ENCODE measurements at regions of chr17 and their contacts with region 1.

Region 1: DNA sequence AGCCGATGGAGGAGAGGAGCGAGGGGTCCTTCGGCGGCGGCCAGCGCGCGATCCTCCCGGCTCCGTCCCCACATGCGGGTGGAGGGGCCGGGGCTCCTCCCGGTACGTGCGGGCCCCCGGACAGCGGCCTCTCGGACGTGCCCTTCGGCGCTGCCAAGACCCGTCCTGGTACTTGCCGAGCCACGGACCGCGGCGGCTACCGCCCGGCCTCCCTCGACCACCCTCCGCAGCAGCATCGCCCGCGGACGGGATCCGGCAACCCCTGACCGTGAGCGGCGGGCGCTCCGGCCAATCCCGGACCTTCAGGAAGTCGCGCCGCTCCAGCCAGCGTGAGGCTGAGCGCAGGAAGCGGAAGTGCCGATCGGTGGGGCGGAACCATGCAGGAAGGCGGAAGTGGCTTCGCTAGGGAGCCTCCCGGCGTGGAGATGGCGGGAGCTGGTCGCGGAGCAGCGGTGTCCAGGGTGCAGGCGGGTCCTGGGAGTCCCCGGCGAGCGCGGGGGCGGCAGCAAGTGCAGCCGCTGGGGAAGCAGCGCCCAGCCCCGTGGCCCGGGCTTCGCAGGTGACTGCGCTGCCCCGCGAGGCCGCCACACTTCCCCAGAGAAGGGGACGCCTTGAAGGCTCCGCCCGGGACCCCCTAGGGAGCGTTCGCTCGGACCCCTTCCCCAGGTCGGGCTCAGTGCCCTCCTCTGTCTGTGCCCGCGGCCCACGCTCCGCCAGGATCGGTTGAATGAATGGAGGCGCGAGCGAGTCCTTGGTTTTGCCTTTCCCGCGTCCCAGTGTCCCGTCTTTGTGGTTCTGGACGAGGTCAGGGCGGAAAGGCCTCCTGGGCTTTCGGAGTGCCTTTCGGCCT is at the starts of genes CCDC137 and OXLD1:
- DNase-seq: peak; percentile 79 to 97
- H3K4me3 ChIP-seq: peak within 1 kb of the TSS; percentile 68 to 69
- H3K27ac ChIP-seq: peak within 1 kb of the TSS; percentile 65 to 80
- H3K4me1 ChIP-seq: peaks cover 3 to 17% of the 10 kb centered on the region in 2 donors
- H3K27me3 ChIP-seq: no peaks in the 10 kb centered on the region
- CTCF ChIP-seq: no peak
- total RNA-seq, gene CCDC137: 15.8 TPM
- total RNA-seq, gene OXLD1: 96.1 TPM

Region 2: DNA sequence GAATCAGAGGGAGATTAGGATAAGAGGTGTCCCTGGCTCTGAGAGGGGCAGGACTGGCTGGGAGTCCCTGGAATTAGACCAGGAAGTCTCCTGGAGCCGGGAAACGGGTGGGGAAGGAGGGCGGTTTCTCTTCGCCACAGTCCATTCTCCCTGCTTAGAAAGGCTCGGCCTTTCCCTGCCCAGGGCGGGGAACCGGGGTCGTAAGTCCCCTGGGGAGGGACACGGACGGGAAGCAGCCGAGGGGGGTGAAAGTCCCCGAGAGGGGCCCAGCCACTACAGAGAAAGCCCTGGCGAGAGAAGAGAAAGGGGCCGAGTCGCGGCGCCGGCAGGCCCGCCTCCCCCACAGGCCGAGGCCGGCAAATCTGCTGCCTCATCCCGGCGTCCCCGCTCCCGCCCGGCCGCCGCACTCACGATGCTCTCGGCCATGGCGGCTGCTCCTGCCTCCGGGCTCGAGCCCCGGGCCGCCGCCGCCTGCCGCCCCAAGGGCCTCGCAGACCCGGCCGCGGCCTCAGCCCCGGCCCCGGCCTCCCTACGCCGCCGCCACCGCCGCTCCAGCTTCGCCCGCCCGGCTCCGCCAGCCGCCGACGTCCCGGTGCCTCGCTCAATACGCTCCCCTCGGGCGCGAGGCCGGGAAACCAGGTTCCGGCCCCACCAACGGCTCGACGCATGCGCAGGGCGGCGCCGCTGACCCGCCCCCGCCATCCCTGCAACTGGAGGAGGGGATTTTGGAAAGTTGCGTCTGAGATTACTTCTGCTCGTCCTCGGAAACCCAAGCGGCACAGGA is 29.9 kb before region 1 on chr17 and contains the starts of genes NPLOC4 and TSPAN10:
- intact Hi-C with region 1: loop called (anchors 1 kb)
- DNase-seq: peak; percentile 14 to 90
- H3K4me3 ChIP-seq: peak within 1 kb of the TSS; percentile 80 to 89
- H3K27ac ChIP-seq: peak within 1 kb of the TSS; percentile 78 to 85
- H3K4me1 ChIP-seq: peaks cover 9 to 17% of the 10 kb centered on the region in 2 donors
- H3K27me3 ChIP-seq: no peaks in the 10 kb centered on the region
- CTCF ChIP-seq: peak in 1 of 3 experiments; percentile 7
- total RNA-seq, gene NPLOC4: 128 TPM
- total RNA-seq, gene TSPAN10: not detected

Region 3: DNA sequence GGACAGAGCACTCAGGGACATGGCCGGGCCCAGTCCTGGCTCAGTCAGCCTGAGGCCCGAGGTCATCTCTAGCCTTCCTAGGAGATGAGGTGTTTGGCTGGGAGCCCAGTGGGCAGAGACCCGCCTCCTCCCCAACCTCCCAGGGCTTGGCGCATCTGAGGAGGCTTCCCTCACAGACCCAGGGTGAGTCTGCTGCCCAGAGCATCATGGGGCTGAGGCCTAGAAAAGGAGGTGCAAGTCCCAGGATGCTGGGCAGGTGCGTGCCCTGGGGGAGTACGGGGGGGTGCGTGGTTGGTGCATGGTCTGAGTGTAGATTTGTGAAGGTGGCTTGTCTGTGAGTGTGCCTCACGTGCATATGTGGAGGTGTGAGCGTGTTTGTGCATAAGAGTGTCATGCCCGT is 14.9 kb before region 1 on chr17:
- intact Hi-C with region 1: no loop called
- DNase-seq: no peak
- H3K4me3 ChIP-seq: no peak overlapping the region
- H3K27ac ChIP-seq: no peak overlapping the region
- H3K4me1 ChIP-seq: no peaks in the 10 kb centered on the region
- H3K27me3 ChIP-seq: peaks cover 5% of the 10 kb centered on the region
- CTCF ChIP-seq: no peak

Region 4: DNA sequence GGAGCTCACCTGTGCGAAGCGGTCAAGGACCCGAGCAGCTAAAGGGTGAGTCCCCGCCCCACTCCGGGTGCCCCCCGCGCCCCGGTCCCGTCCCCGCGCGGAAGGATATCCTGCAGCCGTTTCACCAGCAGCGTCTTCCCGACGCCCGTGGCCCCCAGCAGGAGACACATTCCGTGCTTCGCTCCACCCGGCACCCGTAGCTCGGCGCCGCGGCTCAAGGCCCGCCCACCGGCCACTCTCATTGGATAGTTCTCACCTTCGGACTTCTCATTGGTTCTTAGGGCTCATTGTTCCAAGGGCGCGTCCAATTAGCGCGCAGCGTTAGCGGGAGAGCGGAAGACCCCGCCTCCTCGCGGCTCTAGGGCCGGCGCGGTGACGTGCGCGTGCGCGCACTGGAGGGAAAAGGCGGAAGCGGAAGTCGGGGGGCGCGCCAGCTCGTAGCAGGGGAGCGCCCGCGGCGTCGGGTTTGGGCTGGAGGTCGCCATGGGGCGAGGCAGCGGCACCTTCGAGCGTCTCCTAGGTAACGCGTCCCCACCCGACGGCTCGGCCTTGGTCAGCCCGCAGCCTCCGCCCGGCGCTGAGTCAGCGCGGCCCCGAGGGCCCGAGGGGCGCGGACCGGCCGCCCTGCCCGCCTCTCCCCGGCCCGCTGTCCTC is 17.1 kb after region 1 on chr17 and contains the starts of genes ARL16 and HGS:
- intact Hi-C with region 1: loop called (anchors 1 kb)
- DNase-seq: peak; percentile 95 to 99
- H3K4me3 ChIP-seq: peak within 1 kb of the TSS; percentile 66 to 84
- H3K27ac ChIP-seq: peak within 1 kb of the TSS; percentile 82 to 89
- H3K4me1 ChIP-seq: peaks cover 14 to 20% of the 10 kb centered on the region in 2 donors
- H3K27me3 ChIP-seq: no peaks in the 10 kb centered on the region
- CTCF ChIP-seq: no peak
- total RNA-seq, gene ARL16: 21.0 TPM
- total RNA-seq, gene HGS: 211 TPM

Region 5: GRCh38 chr17:81701288-81702071 is 34.9 kb after region 1 on chr17:
- intact Hi-C with region 1: no loop called
- DNase-seq: no peak
- H3K4me3 ChIP-seq: peak overlapping the region; percentile 76 to 83
- H3K27ac ChIP-seq: no peak overlapping the region
- H3K4me1 ChIP-seq: peaks cover 19 to 20% of the 10 kb centered on the region in 2 donors
- H3K27me3 ChIP-seq: no peaks in the 10 kb centered on the region
- CTCF ChIP-seq: no peak

Region 6: DNA sequence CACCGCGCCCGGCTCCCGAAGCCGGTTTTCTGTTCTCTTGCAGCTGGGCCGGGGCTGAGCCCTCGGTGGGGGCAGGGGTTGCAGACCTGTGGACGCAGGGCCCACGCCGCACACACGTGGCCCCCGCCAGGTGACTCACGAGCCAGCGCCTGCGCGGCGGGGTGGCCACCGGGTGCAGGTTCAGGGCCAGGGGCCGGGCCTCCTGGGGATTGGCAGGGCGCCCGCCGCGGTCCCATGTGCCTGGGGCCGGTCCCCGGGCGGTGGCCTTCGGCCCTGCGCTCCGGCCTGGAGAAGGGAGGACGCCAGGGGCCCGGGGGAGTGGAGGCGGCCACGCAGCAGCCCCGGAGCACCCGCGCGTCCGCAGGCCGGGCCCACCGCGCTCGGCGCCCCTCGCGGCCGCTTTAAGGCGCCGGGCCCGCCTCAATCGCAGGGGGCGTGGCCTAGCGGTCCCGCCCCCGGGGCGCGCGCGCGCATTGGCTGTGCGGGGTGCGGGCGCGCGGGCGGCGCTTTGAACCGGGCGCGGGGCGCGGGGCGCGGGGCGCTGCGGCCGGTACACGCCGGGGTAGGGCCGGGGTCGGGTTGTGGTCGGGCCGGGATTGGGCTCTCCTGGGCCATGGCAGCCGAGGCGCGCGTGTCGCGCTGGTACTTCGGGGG is 45.4 kb after region 1 on chr17 and contains the start of gene SLC25A10:
- intact Hi-C with region 1: loop called (anchors 1 kb)
- DNase-seq: peak; percentile 27 to 81
- H3K4me3 ChIP-seq: peak within 1 kb of the TSS; percentile 81 to 82
- H3K27ac ChIP-seq: peak within 1 kb of the TSS in 1 of 2 donors; percentile 11
- H3K4me1 ChIP-seq: peaks cover 7 to 13% of the 10 kb centered on the region in 2 donors
- H3K27me3 ChIP-seq: no peaks in the 10 kb centered on the region
- CTCF ChIP-seq: peak in 1 of 3 experiments; percentile 40
- total RNA-seq, gene SLC25A10: 0.53 TPM

Measured in ascending aorta (tissue), 2 donors.